ENCODE measurements at regions of chr9 and their contacts with region 1.

Region 1: DNA sequence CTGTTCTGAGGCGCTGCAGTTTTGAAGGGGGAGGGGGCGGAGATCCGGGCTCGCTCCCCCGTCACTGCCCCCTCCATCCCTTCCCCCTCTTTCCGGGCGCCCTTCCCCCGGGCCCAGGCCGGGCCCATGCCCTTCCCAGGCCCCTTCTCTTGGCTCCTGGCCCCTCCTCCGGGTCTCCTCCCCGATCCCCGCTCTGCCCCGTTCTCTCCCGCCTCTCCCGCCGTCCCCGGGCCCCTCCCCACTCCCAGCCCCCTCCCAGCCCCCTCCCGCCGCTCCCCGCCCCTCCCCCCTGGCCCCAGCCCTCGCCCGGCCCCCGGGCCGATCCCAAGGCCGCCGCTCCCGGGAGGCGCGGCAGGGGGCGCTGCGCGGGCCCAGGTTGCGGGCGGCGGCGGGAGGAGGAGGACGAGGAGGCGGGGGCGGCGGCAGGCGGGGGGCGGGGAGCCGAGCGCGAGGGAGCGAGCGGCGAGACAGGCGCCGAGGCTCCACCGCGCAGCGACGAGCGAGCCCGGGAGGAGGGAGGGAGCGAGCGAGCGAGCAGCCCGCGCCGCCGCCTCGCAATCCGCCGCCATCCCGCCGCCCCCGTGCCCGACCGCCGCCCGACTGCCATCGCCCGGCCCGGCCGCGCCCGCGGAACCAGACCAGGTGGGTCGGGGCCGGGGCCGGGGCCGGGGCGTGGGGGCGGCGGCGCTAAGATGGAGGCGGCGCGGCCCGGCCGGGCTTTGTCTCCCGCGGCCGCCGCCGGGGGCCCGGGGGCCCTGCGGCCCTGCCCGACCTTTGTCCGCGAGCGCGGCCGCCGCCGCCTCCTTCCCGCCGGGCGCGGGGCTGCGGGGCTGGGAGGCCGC is at the start of gene PRRC2B:
- DNase-seq: peak; percentile 91
- ATAC-seq: peak; percentile 61
- H3K4me3 Mint-ChIP-seq: peak within 1 kb of the TSS; percentile 90
- H3K27ac Mint-ChIP-seq: peak within 1 kb of the TSS; percentile 97
- H3K4me1 Mint-ChIP-seq: peaks cover 47% of the 10 kb centered on the region
- H3K27me3 Mint-ChIP-seq: no peaks in the 10 kb centered on the region
- CTCF ChIP-seq: no peak
- total RNA-seq, gene PRRC2B: 170 and 206 TPM in 2 replicates

Region 2: DNA sequence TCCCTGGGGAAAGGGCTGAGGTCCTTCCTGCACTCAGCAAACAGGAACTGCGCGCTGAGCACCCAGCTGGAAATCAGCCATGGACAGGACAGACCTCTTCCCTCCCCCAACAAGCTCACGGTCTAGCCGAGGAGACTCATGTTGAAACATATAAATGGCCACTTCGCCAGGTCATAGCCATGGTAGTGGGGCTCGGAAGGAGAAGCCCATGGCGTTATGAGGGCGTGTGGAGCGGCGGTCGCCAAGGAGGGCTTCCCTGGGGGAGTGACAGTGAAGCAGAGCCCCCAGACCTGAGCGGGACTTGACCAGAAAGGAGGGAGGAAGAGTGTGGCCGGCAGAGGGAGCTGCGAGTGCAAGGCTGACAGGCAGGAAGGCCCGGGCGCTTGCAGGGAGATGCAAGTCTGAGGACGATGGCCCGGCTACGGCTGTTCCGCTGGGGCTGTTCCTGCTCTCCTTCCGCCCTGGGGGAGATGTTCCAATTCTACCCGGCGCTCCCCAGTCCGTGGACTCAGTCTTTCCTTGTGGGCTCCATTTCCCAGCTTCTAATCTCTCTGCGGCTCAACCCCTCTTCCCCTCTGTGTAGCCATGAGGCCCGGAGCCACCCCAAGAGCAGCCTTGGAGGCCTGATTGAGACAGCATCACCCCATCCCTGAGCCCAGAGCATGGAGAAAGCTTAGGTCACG is 43.8 kb before region 1 on chr9:
- CTCF ChIA-PET with region 1: no interaction called
- POLR2A ChIA-PET with region 1: interaction called, 3 read pairs
- intact Hi-C with region 1: loop called (anchors 1 kb)
- DNase-seq: peak; percentile 79
- ATAC-seq: peak; percentile 97
- H3K4me3 Mint-ChIP-seq: peak overlapping the region; percentile 29
- H3K27ac Mint-ChIP-seq: no peak overlapping the region
- H3K4me1 Mint-ChIP-seq: peaks cover 6% of the 10 kb centered on the region
- H3K27me3 Mint-ChIP-seq: peaks cover 2% of the 10 kb centered on the region
- CTCF ChIP-seq: no peak

Region 3: DNA sequence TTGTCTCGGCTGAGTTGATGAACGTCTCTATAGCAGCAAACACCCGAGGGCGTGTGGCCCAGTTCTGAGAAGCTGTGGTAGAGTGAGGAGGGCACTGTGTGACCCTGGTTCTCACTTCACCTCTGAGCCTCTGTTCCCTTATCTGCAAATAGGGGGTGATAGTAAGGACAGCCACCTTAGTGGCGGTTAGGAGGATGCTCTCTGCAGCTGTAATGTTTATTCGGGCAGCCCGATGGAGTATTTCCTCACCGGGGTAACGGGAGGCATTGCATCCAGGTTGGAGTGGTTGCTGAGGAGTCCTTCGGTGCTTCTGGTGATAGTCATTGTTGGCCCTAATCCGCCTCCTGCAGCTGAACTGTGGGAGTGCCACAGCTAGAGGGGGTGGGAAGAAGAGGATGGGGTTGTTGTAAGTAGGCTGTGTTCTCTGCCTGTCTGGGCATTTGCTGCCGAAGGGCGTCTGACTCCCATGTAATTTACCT is 13.9 kb after region 1 on chr9:
- CTCF ChIA-PET with region 1: no interaction called
- POLR2A ChIA-PET with region 1: interaction called, 8 read pairs
- intact Hi-C with region 1: loop called (anchors 2 kb)
- DNase-seq: no peak
- ATAC-seq: peak; percentile 22
- H3K4me3 Mint-ChIP-seq: peak overlapping the region; percentile 16
- H3K27ac Mint-ChIP-seq: peak overlapping the region; percentile 24
- H3K4me1 Mint-ChIP-seq: peaks cover 88% of the 10 kb centered on the region
- H3K27me3 Mint-ChIP-seq: no peaks in the 10 kb centered on the region
- CTCF ChIP-seq: no peak

Region 4: GRCh38 chr9:131441441-131441840 is 47.6 kb after region 1 on chr9:
- CTCF ChIA-PET with region 1: no interaction called
- POLR2A ChIA-PET with region 1: interaction called, 3 read pairs
- intact Hi-C with region 1: loop called (anchors 1 kb)
- DNase-seq: peak; percentile 37
- ATAC-seq: peak; percentile 99
- H3K4me3 Mint-ChIP-seq: peak overlapping the region; percentile 46
- H3K27ac Mint-ChIP-seq: peak overlapping the region; percentile 86
- H3K4me1 Mint-ChIP-seq: peaks cover 31% of the 10 kb centered on the region
- H3K27me3 Mint-ChIP-seq: no peaks in the 10 kb centered on the region
- CTCF ChIP-seq: no peak

Region 5: DNA sequence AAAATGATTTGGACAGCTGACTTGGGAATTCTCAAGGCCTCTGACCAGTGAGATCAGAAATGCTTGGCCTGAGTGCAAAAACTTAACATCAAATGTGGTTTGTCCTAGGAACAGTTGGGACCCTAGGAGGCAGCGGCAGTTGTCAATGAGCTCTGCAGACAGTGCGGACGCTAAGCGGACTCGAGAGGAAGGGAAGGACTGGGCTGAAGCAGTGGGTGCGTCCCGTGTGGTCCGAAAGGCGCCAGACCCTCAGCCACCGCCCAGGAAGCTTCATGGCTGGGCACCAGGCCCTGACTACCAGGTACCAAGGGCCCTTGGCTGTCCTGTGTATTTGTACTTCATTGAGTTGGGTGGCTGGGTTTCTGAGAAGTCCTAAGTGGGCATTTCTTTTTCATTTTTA is 65.2 kb after region 1 on chr9:
- CTCF ChIA-PET with region 1: no interaction called
- POLR2A ChIA-PET with region 1: no interaction called
- intact Hi-C with region 1: no loop called
- DNase-seq: no peak
- ATAC-seq: no peak
- H3K4me3 Mint-ChIP-seq: no peak overlapping the region
- H3K27ac Mint-ChIP-seq: no peak overlapping the region
- H3K4me1 Mint-ChIP-seq: no peaks in the 10 kb centered on the region
- H3K27me3 Mint-ChIP-seq: no peaks in the 10 kb centered on the region
- CTCF ChIP-seq: no peak

Region 6: GRCh38 chr9:131546336-131547084 is 152.7 kb after region 1 on chr9:
- CTCF ChIA-PET with region 1: no interaction called
- POLR2A ChIA-PET with region 1: no interaction called
- intact Hi-C with region 1: no loop called
- DNase-seq: no peak
- ATAC-seq: peak; percentile 18
- H3K4me3 Mint-ChIP-seq: peak overlapping the region; percentile 55
- H3K27ac Mint-ChIP-seq: no peak overlapping the region
- H3K4me1 Mint-ChIP-seq: peaks cover 10% of the 10 kb centered on the region
- H3K27me3 Mint-ChIP-seq: peaks cover 46% of the 10 kb centered on the region
- CTCF ChIP-seq: no peak

Region 7: GRCh38 chr9:132354637-132355355 is 961.0 kb after region 1 on chr9 and contains the start of gene SETX:
- CTCF ChIA-PET with region 1: no interaction called
- POLR2A ChIA-PET with region 1: no interaction called
- intact Hi-C with region 1: loop called (anchors 10 kb)
- DNase-seq: peak; percentile 93
- ATAC-seq: peak; percentile 87
- H3K4me3 Mint-ChIP-seq: peak within 1 kb of the TSS; percentile 94
- H3K27ac Mint-ChIP-seq: peak within 1 kb of the TSS; percentile 97
- H3K4me1 Mint-ChIP-seq: peaks cover 53% of the 10 kb centered on the region
- H3K27me3 Mint-ChIP-seq: no peaks in the 10 kb centered on the region
- CTCF ChIP-seq: no peak
- total RNA-seq, gene SETX: 91.3 and 109 TPM in 2 replicates

Measured in activated B cell treated with CpG ODN at 0.5 μM for 24 hours (primary cell).